Caco-2 (cell line): ENCODE measurements at regions of chr6 and their contacts with region 1.

Region 1: GRCh38 chr6:49849213-49849907 is 17.0 kb downstream of the CRISP1 start:
- DNase-seq: peak in 1 of 2 experiments; percentile 30
- H3K4me3 ChIP-seq: no peak overlapping the region
- H3K4me3 Mint-ChIP-seq: no peak overlapping the region
- H3K27ac Mint-ChIP-seq: no peak overlapping the region
- H3K4me1 ChIP-seq: no peaks in the 10 kb centered on the region
- H3K4me1 Mint-ChIP-seq: no peaks in the 10 kb centered on the region
- H3K27me3 ChIP-seq: no peaks in the 10 kb centered on the region
- H3K27me3 Mint-ChIP-seq: no peaks in the 10 kb centered on the region
- CTCF ChIP-seq: peak; percentile 27 to 57

Region 2: DNA sequence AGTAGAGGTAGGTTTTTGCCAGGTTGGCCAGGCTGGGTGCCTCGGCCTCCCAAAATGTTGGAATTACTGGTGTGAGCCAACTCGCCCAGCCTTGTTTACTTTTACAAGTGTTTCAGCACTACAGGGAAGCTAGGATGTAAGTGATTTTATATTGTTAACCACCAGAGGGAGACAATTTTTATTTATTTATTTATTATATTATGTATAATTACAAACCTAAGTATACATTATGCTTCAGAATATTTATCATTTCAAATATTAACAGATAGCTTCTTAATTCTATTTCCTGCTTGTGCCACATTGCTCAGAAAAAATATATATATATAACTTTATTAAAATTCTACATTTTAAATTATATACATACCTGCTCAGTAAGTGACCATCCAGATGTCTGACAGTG is 396.1 kb before region 1 on chr6:
- CTCF ChIA-PET with region 1: no interaction called
- POLR2A ChIA-PET with region 1: no interaction called
- intact Hi-C with region 1: loop called (anchors 10 kb)
- DNase-seq: no peak
- H3K4me3 ChIP-seq: no peak overlapping the region
- H3K4me3 Mint-ChIP-seq: no peak overlapping the region
- H3K27ac Mint-ChIP-seq: no peak overlapping the region
- H3K4me1 ChIP-seq: no peaks in the 10 kb centered on the region
- H3K4me1 Mint-ChIP-seq: no peaks in the 10 kb centered on the region
- H3K27me3 ChIP-seq: no peaks in the 10 kb centered on the region
- H3K27me3 Mint-ChIP-seq: no peaks in the 10 kb centered on the region
- CTCF ChIP-seq: peak in 1 of 2 experiments; percentile 46

Region 3: DNA sequence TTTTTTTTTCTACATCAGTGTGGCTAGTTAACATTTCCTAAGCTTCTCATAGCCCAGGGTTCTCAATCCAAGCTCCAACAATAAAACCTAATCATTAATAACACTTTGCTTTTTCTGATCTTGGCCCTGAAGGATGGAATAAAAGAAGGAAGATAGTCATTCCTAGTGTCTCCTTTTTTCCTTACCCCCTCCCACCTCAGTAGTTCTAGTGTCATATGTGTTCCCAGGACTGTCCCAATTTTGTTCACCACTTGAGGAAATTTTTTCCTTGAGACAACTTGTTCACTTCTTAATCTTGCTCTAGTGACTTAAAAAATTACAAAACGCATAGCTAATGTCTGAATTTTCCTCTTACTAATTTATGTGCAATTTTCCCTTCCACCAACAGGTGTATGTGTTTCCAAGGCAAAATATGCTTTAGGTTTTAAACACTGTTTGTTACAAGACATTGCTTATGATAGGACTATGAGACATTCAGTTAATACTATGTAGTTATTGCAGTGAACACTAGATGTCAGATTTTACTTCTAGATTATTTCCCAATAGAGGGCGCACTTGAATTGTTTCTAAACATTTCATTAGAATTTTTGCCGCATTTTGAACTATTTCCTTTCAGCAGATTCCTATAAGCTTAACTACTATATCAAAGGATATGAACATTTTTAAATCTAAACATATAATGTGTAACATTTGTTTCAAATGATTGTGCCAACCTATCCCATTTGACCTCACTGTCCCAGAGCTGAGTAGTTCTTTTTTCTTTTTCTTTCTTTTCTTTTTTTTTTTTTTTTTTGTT is 317.4 kb before region 1 on chr6:
- CTCF ChIA-PET with region 1: interaction called, 7 read pairs
- POLR2A ChIA-PET with region 1: no interaction called
- intact Hi-C with region 1: loop called (anchors 1 kb)
- DNase-seq: peak in 1 of 2 experiments; percentile 32
- H3K4me3 ChIP-seq: no peak overlapping the region
- H3K4me3 Mint-ChIP-seq: no peak overlapping the region
- H3K27ac Mint-ChIP-seq: no peak overlapping the region
- H3K4me1 ChIP-seq: no peaks in the 10 kb centered on the region
- H3K4me1 Mint-ChIP-seq: no peaks in the 10 kb centered on the region
- H3K27me3 ChIP-seq: no peaks in the 10 kb centered on the region
- H3K27me3 Mint-ChIP-seq: no peaks in the 10 kb centered on the region
- CTCF ChIP-seq: peak; percentile 80 to 82

Region 4: DNA sequence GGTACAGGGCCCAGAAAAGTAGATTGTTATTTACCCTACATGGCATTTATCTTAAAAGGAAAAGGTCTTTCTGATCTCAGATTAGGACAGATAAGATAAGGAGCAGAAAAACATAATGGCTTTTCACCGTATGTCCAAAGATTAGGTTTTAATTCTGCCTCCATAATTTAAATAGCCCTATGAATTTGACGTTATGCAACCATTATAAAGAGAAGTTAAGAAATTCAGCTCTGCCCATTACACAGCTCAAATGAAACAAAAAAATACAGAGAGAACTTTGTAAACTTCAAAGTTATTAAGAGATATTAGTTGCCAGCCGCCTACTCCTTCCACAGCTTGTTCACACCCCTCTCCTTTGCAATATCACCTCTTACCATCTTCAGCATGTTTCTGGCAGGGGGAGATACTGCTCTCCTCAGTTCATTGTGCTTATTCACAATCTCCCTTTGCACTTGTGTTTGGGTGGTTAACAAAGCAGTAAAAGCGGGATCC is 113.3 kb before region 1 on chr6:
- CTCF ChIA-PET with region 1: no interaction called
- POLR2A ChIA-PET with region 1: no interaction called
- intact Hi-C with region 1: loop called (anchors 2 kb)
- DNase-seq: peak in 1 of 2 experiments; percentile 1
- H3K4me3 ChIP-seq: no peak overlapping the region
- H3K4me3 Mint-ChIP-seq: peak overlapping the region; percentile 59
- H3K27ac Mint-ChIP-seq: peak overlapping the region; percentile 56
- H3K4me1 ChIP-seq: peaks cover 25% of the 10 kb centered on the region
- H3K4me1 Mint-ChIP-seq: peaks cover 9% of the 10 kb centered on the region
- H3K27me3 ChIP-seq: no peaks in the 10 kb centered on the region
- H3K27me3 Mint-ChIP-seq: no peaks in the 10 kb centered on the region
- CTCF ChIP-seq: no peak